ENCODE measurements at regions of chr16 and their contacts with region 1.

Region 1: GRCh38 chr16:15548482-15548891 is 94.5 kb downstream of the MARF1 start:
- DNase-seq: no peak
- ATAC-seq: no peak
- H3K4me3 ChIP-seq: no peak overlapping the region
- H3K27ac ChIP-seq: 0 out of 2 replicates have a peak overlapping the region, but pooled peaks have one; percentile 7
- H3K4me1 ChIP-seq: no peaks in the 10 kb centered on the region; the same call in 1 of the 2 replicates
- H3K27me3 ChIP-seq: no peaks in the 10 kb centered on the region
- CTCF ChIP-seq: no peak

Region 2: GRCh38 chr16:15404792-15405191 is 143.7 kb before region 1 on chr16:
- CTCF ChIA-PET with region 1: no interaction called
- POLR2A ChIA-PET with region 1: interaction called, 11 read pairs
- in situ Hi-C with region 1: no loop called
- intact Hi-C with region 1: no loop called
- DNase-seq: no peak
- ATAC-seq: 0 out of 2 replicates have a peak, but pooled peaks have one; percentile 20
- H3K4me3 ChIP-seq: no peak overlapping the region
- H3K27ac ChIP-seq: no peak overlapping the region
- H3K4me1 ChIP-seq: no peaks in the 10 kb centered on the region
- H3K27me3 ChIP-seq: no peaks in the 10 kb centered on the region
- CTCF ChIP-seq: no peak

Region 3: GRCh38 chr16:15523092-15523541 is 25.4 kb before region 1 on chr16:
- CTCF ChIA-PET with region 1: no interaction called
- POLR2A ChIA-PET with region 1: no interaction called
- in situ Hi-C with region 1: no loop called
- intact Hi-C with region 1: no loop called
- DNase-seq: no peak
- ATAC-seq: peak; percentile 58; the same call in 1 of the 2 replicates
- H3K4me3 ChIP-seq: no peak overlapping the region
- H3K27ac ChIP-seq: no peak overlapping the region
- H3K4me1 ChIP-seq: no peaks in the 10 kb centered on the region
- H3K27me3 ChIP-seq: no peaks in the 10 kb centered on the region
- CTCF ChIP-seq: no peak; the same call in 1 of the 2 replicates

Region 4: DNA sequence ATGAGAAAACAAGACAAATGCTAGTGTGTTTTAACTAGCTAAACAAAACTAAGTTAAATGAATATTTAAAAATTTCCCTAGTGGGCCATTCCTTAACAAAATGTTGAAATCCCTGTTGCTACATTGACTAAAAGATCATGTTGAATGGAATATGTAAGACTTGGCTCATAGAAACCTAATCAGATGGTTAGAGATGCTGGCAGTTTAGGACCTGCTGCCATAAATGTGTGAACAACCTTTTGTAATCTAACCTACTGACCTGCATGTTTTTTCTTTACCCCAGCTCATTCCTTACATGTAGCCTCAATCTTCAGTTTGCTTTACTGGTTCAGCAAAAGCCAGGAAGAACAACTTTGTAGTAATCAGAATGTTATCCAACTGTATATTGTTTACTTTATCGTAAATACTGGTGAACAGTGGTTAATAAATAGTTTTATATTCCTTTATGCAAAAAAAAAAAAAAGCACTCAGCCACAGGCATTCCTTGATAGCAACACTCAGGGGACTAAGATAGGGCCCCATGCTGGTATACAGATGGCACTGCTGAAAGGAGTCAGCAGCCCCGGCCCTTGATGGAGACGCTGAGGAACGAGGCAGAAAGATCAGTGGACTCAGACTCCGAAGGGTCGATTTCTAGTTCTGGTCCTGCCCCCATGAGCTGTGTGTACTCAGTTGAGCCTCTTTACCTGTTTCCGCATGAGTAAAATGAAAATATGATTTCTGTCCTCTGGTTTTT is 16.3 kb after region 1 on chr16:
- CTCF ChIA-PET with region 1: no interaction called
- POLR2A ChIA-PET with region 1: interaction called, 13 read pairs
- in situ Hi-C with region 1: no loop called
- intact Hi-C with region 1: no loop called
- DNase-seq: no peak
- ATAC-seq: no peak
- H3K4me3 ChIP-seq: no peak overlapping the region
- H3K27ac ChIP-seq: no peak overlapping the region
- H3K4me1 ChIP-seq: peaks cover 5% of the 10 kb centered on the region; the same call in 1 of the 2 replicates
- H3K27me3 ChIP-seq: no peaks in the 10 kb centered on the region
- CTCF ChIP-seq: no peak

Region 5: GRCh38 chr16:15576960-15577958 is 28.8 kb after region 1 on chr16:
- CTCF ChIA-PET with region 1: no interaction called
- POLR2A ChIA-PET with region 1: no interaction called
- in situ Hi-C with region 1: no loop called
- intact Hi-C with region 1: no loop called
- DNase-seq: no peak
- ATAC-seq: no peak
- H3K4me3 ChIP-seq: no peak overlapping the region
- H3K27ac ChIP-seq: no peak overlapping the region
- H3K4me1 ChIP-seq: no peaks in the 10 kb centered on the region
- H3K27me3 ChIP-seq: no peaks in the 10 kb centered on the region
- CTCF ChIP-seq: no peak

Region 6: GRCh38 chr16:15620796-15621195 is 72.3 kb after region 1 on chr16:
- CTCF ChIA-PET with region 1: no interaction called
- POLR2A ChIA-PET with region 1: no interaction called
- in situ Hi-C with region 1: no loop called
- intact Hi-C with region 1: no loop called
- DNase-seq: no peak
- ATAC-seq: no peak
- H3K4me3 ChIP-seq: no peak overlapping the region
- H3K27ac ChIP-seq: no peak overlapping the region
- H3K4me1 ChIP-seq: no peaks in the 10 kb centered on the region
- H3K27me3 ChIP-seq: no peaks in the 10 kb centered on the region
- CTCF ChIP-seq: no peak

Region 7: DNA sequence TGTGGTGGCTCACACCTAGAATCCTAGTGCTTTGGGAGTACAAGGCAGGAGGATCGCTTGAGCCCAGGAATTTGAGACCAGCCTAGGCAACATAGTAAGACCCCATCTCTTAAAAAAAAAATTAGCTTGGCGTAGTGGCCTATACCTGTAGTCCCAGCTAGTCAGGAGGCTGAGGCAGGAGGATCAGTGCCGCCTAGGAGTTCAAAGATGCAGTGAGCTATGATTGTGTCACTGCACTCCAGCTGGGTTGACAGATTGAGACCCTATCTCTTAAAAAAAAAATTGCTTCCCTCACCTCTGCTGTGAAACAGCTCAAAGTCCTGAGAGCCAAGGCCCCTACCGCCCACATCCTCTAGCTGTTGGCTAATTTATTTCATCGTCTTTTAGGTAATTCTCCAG is 111.7 kb after region 1 on chr16:
- CTCF ChIA-PET with region 1: no interaction called
- POLR2A ChIA-PET with region 1: interaction called, 11 read pairs
- in situ Hi-C with region 1: no loop called
- intact Hi-C with region 1: no loop called
- DNase-seq: no peak
- ATAC-seq: no peak
- H3K4me3 ChIP-seq: no peak overlapping the region
- H3K27ac ChIP-seq: no peak overlapping the region
- H3K4me1 ChIP-seq: no peaks in the 10 kb centered on the region
- H3K27me3 ChIP-seq: no peaks in the 10 kb centered on the region
- CTCF ChIP-seq: no peak